Activated CD4-positive, alpha-beta memory T cell treated with anti-CD3 and anti-CD28 coated beads for 36 hours (primary cell): ENCODE measurements at regions of chr17 and their contacts with region 1.

Region 1: GRCh38 chr17:3647769-3648555 is 11.4 kb downstream of the CTNS start:
- DNase-seq: peak; percentile 71
- H3K4me3 Mint-ChIP-seq: no peak overlapping the region
- H3K27ac Mint-ChIP-seq: no peak overlapping the region
- H3K4me1 Mint-ChIP-seq: peaks cover 8% of the 10 kb centered on the region
- H3K27me3 Mint-ChIP-seq: no peaks in the 10 kb centered on the region

Region 2: DNA sequence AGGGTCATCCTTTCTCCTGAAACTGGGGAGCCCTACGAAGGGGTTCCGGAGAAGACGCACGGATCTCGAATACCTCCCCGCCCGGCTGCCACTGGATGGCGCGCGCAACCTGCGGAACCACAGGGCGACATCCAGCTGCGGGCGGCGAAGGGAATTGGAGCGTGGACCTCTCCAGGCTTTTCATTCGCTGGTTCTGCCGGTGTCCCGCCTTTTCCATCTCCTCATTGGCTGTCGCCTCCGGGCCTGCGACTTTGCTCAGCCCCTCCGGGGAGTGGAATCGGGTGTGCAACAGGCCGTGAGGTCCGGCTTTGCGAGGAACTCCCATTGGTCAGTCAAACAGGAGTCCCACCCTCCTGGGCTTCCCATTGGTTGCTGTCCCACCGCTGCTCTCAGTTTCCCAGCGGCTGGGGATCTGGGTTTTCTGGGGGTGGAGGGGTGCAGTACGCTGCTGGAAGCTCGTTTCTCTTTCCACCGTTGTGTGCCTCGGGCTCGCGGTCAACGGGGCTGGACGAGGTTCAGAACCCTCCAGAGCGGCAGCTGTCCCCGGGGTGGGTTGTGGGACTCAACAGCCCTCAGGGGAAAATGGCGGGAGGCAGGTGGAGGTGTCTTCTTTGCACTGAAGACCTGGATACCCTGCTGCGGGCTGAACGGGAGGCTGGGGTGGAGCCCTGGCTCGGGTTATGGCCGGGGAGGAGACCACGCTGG is 599.0 kb before region 1 on chr17:
- CTCF ChIA-PET with region 1: interaction called, 19 read pairs
- POLR2A ChIA-PET with region 1: no interaction called
- intact Hi-C with region 1: no loop called
- DNase-seq: peak; percentile 97
- H3K4me3 Mint-ChIP-seq: peak overlapping the region; percentile 93
- H3K27ac Mint-ChIP-seq: peak overlapping the region; percentile 83
- H3K4me1 Mint-ChIP-seq: peaks cover 12% of the 10 kb centered on the region
- H3K27me3 Mint-ChIP-seq: no peaks in the 10 kb centered on the region

Region 3: GRCh38 chr17:3602499-3602898 is 45.5 kb before region 1 on chr17:
- CTCF ChIA-PET with region 1: interaction called, 21 read pairs
- POLR2A ChIA-PET with region 1: no interaction called
- intact Hi-C with region 1: loop called (anchors 1 kb)
- DNase-seq: peak; percentile 40
- H3K4me3 Mint-ChIP-seq: no peak overlapping the region
- H3K27ac Mint-ChIP-seq: no peak overlapping the region
- H3K4me1 Mint-ChIP-seq: no peaks in the 10 kb centered on the region
- H3K27me3 Mint-ChIP-seq: no peaks in the 10 kb centered on the region